CD4-positive, alpha-beta T cell (primary cell): ENCODE measurements at regions of chr12 and their contacts with region 1.

Region 1: DNA sequence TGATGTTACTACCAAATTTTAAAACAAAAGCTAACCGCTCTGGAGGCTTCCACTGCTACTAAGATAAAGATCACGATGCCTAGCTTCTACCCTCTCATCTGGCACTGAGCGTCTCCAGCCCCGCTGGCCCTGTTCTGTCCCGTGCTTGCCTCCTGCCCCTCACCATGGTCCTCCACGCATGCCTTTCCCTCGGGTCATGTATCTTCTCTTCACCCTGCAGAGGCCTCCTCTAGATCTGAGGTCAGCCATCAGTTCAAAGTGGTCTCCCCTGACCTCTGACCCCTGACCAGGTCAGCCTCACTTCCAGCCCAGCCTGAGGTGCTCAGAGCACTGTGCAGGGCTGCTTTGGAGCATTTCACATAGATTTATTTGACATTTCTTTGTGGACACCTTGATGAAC is 28.3 kb downstream of the ZNF664 start:
- DNase-seq: no peak
- ATAC-seq: no peak
- H3K4me3 ChIP-seq: no peak overlapping the region
- H3K4me3 Mint-ChIP-seq: no peak overlapping the region
- H3K27ac ChIP-seq: no peak overlapping the region
- H3K27ac Mint-ChIP-seq: no peak overlapping the region
- H3K4me1 ChIP-seq: peaks cover 11% of the 10 kb centered on the region
- H3K4me1 Mint-ChIP-seq: peaks cover 34% of the 10 kb centered on the region
- H3K27me3 ChIP-seq: no peaks in the 10 kb centered on the region
- H3K27me3 Mint-ChIP-seq: no peaks in the 10 kb centered on the region
- CTCF ChIP-seq: no peak

Region 2: GRCh38 chr12:123829561-123829960 is 171.8 kb before region 1 on chr12:
- CTCF ChIA-PET with region 1: no interaction called
- POLR2A ChIA-PET with region 1: no interaction called
- intact Hi-C with region 1: no loop called
- DNase-seq: no peak
- ATAC-seq: no peak
- H3K4me3 ChIP-seq: no peak overlapping the region
- H3K4me3 Mint-ChIP-seq: no peak overlapping the region
- H3K27ac ChIP-seq: no peak overlapping the region
- H3K27ac Mint-ChIP-seq: no peak overlapping the region
- H3K4me1 ChIP-seq: no peaks in the 10 kb centered on the region
- H3K4me1 Mint-ChIP-seq: no peaks in the 10 kb centered on the region
- H3K27me3 ChIP-seq: no peaks in the 10 kb centered on the region
- H3K27me3 Mint-ChIP-seq: no peaks in the 10 kb centered on the region
- CTCF ChIP-seq: no peak

Region 3: DNA sequence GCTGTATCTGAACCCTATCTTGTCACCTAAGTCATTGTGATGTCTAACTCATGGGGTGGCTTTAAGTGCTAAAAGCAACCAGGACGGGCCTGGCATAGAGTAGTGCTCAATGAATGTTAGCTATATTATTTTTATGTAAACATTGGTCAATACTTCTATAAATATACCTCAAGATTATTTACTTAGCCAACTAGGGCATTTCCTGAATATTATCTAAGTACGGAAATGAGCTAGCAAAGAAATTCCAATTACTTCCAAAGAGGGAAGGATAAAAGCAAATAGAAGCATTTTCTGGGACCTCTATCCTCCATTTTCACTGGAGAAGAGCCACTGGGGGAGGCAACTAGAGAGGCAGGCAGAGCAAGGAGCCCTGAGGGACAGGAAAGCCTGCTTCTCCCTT is 49.3 kb before region 1 on chr12:
- CTCF ChIA-PET with region 1: no interaction called
- POLR2A ChIA-PET with region 1: no interaction called
- intact Hi-C with region 1: no loop called
- DNase-seq: no peak
- ATAC-seq: no peak
- H3K4me3 ChIP-seq: no peak overlapping the region
- H3K4me3 Mint-ChIP-seq: no peak overlapping the region
- H3K27ac ChIP-seq: no peak overlapping the region
- H3K27ac Mint-ChIP-seq: no peak overlapping the region
- H3K4me1 ChIP-seq: no peaks in the 10 kb centered on the region
- H3K4me1 Mint-ChIP-seq: no peaks in the 10 kb centered on the region
- H3K27me3 ChIP-seq: no peaks in the 10 kb centered on the region
- H3K27me3 Mint-ChIP-seq: no peaks in the 10 kb centered on the region
- CTCF ChIP-seq: no peak

Region 4: GRCh38 chr12:124022161-124022560 is 20.8 kb after region 1 on chr12:
- CTCF ChIA-PET with region 1: no interaction called
- POLR2A ChIA-PET with region 1: no interaction called
- intact Hi-C with region 1: loop called in 1 of 2 experiments (anchors 1 kb)
- DNase-seq: no peak
- ATAC-seq: no peak
- H3K4me3 ChIP-seq: no peak overlapping the region
- H3K4me3 Mint-ChIP-seq: no peak overlapping the region
- H3K27ac ChIP-seq: no peak overlapping the region
- H3K27ac Mint-ChIP-seq: no peak overlapping the region
- H3K4me1 ChIP-seq: no peaks in the 10 kb centered on the region
- H3K4me1 Mint-ChIP-seq: no peaks in the 10 kb centered on the region
- H3K27me3 ChIP-seq: no peaks in the 10 kb centered on the region
- H3K27me3 Mint-ChIP-seq: no peaks in the 10 kb centered on the region
- CTCF ChIP-seq: no peak